Cardiac septum (tissue), 1 donor: ENCODE measurements at regions of chr3 and their contacts with region 1.

Region 1: DNA sequence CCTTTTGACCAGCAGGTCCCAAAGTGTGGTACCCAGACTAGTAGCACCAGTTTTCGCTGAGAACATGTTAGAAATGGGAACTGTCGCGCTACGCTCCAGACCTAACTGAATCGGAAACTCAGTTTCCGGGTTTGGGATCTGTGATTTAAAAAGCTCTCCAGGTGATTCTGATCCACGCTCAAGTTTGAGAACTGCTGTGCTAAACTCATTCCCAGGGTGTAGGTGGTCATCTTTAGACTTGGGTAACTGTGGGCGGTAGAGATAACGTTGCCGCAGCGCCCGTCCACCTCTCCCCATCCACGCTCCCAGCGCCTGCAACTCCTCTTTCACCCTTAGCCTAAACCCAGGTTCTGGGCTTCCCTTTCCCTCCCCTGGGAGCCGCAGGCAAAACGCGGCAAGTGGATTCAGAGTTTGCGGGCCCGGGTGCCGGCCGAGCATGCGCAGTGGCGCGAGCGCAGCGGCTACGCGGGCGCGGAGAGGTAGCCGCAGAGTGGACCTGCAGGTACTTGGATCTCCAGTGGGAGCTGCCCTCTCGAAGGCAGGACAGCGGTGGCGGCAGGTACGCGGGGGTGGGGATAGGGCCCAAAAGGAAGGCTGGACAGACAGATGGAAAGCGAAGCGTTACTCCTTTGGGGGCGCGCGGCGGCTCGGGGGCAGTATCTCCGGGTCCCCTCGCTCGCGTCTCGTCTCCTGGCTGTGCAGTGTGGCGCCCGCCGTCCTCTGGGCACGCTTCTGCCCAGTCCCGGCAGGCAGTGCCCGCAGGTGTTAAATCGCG is at the start of gene PLS1:
- DNase-seq: peak; percentile 94
- total RNA-seq, gene PLS1: 0.81 TPM

Region 2: DNA sequence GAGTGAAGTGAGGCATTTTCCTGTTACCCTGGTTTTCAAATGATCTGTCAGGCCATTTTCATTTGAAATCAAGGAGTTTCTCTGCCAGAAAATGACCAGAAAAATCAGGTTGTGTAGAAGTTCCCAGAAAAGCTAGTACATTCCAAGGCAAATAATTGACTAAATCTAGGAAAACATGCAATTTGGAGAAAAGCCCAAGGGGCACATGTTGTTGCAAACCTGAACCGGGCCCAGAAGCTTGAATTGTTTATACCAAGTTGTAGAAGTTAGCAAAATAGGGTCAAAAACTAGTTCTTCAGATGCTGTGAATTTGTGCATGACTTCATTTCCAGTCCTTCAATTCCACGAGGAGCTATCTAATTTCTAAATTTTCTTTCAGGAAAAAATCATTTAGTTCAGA is 1887.3 kb before region 1 on chr3:
- intact Hi-C with region 1: no loop called
- DNase-seq: no peak

Region 3: GRCh38 chr3:143001369-143002082 is 405.4 kb after region 1 on chr3 and contains the start of gene U2SURP:
- intact Hi-C with region 1: loop called (anchors 2 kb)
- DNase-seq: peak; percentile 98
- total RNA-seq, gene U2SURP: 40.6 TPM